Transverse colon (tissue), 4 donors: ENCODE measurements at regions of chr1 and their contacts with region 1.

Region 1: GRCh38 chr1:43073490-43074230 is 98.4 kb downstream of the EBNA1BP2 start:
- DNase-seq: peak; percentile 79
- H3K4me3 ChIP-seq: no peak overlapping the region
- H3K27ac ChIP-seq: no peak overlapping the region
- H3K4me1 ChIP-seq: peaks cover 0 to 2% (median 1%) of the 10 kb centered on the region in 4 donors
- H3K27me3 ChIP-seq: peaks cover 1% of the 10 kb centered on the region
- CTCF ChIP-seq: peak; percentile 80 to 94 (median 86)
- EP300 ChIP-seq: no peak
- POLR2A ChIP-seq: no peak

Region 2: DNA sequence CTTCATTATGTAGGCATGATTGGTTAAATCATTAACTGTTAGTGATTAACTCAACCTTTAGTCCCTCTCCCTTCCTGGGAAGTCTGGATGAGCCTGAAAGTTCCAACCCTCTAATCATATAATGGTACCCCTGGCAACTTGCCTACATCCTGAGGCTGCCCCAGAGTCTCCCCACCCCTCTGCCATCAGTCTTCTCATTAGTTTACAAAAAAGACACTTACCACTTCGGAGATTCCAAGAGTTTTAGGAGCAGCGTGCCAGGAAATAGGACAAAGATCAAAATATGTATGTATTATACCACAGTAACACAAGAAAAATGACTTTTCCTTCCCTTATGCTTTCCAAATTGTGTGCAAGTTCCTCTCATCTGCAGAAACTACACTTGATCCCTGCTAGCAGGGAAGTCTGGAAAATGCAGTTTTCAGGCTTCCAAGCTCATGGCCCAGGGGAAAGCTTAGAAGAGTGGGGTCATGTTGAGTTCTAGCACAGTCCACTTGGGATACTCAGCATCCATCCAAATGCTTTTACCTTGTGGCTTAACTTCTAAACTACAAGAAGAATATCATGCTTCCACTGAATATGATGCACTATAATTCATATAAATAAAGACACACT is 480.1 kb before region 1 on chr1:
- in situ Hi-C with region 1: loop called in 1 of 4 experiments (anchors 25 kb)
- intact Hi-C with region 1: no loop called
- DNase-seq: no peak
- H3K4me3 ChIP-seq: no peak overlapping the region
- H3K27ac ChIP-seq: no peak overlapping the region
- H3K4me1 ChIP-seq: no peaks in the 10 kb centered on the region
- H3K27me3 ChIP-seq: no peaks in the 10 kb centered on the region
- CTCF ChIP-seq: no peak
- EP300 ChIP-seq: no peak
- POLR2A ChIP-seq: no peak

Region 3: DNA sequence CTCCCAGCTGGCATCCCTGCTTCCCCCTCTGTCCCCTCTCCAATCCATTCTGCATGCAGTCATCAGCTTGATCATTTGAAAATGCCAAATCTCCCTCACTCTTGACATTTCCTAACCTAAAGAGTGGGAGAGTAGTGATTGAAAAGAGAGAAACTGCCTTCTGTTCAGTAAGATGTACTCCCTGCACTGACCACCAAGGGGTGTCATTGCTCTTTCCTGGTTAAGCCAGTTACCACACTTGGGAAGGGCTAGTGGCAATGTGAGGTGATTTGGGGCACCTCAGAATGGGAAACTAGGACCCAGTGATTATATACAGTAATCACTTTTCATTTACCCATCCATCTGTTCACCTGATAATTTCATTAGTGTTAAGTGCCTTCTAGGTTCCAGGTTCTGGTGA is 295.8 kb before region 1 on chr1:
- in situ Hi-C with region 1: loop called in 3 of 4 experiments (anchors 10 to 25 kb)
- intact Hi-C with region 1: no loop called
- DNase-seq: no peak
- H3K4me3 ChIP-seq: no peak overlapping the region
- H3K27ac ChIP-seq: no peak overlapping the region
- H3K4me1 ChIP-seq: no peaks in the 10 kb centered on the region
- H3K27me3 ChIP-seq: no peaks in the 10 kb centered on the region
- CTCF ChIP-seq: peak; percentile 46 to 55 (median 51)
- EP300 ChIP-seq: no peak
- POLR2A ChIP-seq: no peak

Region 4: GRCh38 chr1:42913426-42914091 is 160.1 kb before region 1 on chr1:
- in situ Hi-C with region 1: loop called (anchors 5 kb)
- intact Hi-C with region 1: loop called (anchors 5 kb)
- DNase-seq: peak; percentile 64
- H3K4me3 ChIP-seq: no peak overlapping the region
- H3K27ac ChIP-seq: no peak overlapping the region
- H3K4me1 ChIP-seq: peaks cover 0 to 2% (median under 1%) of the 10 kb centered on the region in 4 donors
- H3K27me3 ChIP-seq: no peaks in the 10 kb centered on the region
- CTCF ChIP-seq: peak; percentile 74 to 94 (median 83)
- EP300 ChIP-seq: no peak
- POLR2A ChIP-seq: no peak

Region 5: GRCh38 chr1:43367904-43368645 is 294.4 kb after region 1 on chr1 and contains the start of gene ELOVL1:
- in situ Hi-C with region 1: no loop called
- intact Hi-C with region 1: no loop called
- DNase-seq: peak; percentile 94
- H3K4me3 ChIP-seq: peak within 1 kb of the TSS; percentile 56 to 75 (median 70)
- H3K27ac ChIP-seq: peak within 1 kb of the TSS; percentile 93 to 96 (median 94)
- H3K4me1 ChIP-seq: peaks cover 12 to 43% (median 26%) of the 10 kb centered on the region in 4 donors
- H3K27me3 ChIP-seq: no peaks in the 10 kb centered on the region
- CTCF ChIP-seq: no peak
- EP300 ChIP-seq: no peak
- POLR2A ChIP-seq: peak; percentile 90
- total RNA-seq, gene ELOVL1: 58.4 to 114 (median 99.5) TPM